ENCODE measurements at regions of chr12 and their contacts with region 1.

Region 1: DNA sequence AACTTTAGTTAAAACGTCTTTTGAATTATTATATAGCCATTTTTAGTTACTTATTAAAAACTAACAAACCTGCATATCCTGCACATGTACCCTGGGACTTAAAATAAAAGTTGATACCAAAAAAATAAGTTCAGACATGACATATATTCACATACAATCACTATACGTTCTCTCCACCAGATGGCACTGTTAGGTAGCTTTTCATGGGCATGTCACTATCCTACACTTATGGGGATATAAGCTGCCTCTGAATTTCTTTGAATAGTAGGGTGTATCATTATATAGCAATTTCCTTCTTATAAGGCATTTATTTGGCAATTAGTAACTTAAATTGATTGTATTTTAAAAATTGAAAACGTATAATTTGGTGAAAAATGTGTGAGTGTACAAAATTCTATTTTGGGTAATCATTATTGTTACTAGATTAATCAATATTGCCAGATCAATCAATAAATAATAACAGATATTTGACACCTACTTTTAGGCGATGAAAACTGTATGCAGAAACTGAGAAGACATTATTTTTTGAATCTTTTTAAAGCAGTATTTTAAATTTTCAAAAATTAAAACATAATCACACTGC is 31.8 kb upstream of the OR10A7 start:
- DNase-seq: peak; percentile 87
- H3K4me3 ChIP-seq: no peak overlapping the region
- H3K27ac ChIP-seq: no peak overlapping the region
- H3K4me1 ChIP-seq: no peaks in the 10 kb centered on the region
- H3K27me3 ChIP-seq: peaks cover 0 to 5% of the 10 kb centered on the region in 2 experiments
- CTCF ChIP-seq: peak; percentile 43 to 46
- POLR2A ChIP-seq: no peak

Region 2: GRCh38 chr12:55172686-55173085 is 16.4 kb before region 1 on chr12:
- CTCF ChIA-PET with region 1: interaction called, 10 read pairs
- POLR2A ChIA-PET with region 1: no interaction called
- dilution Hi-C with region 1: no loop called
- intact Hi-C with region 1: no loop called
- DNase-seq: no peak
- H3K4me3 ChIP-seq: no peak overlapping the region
- H3K27ac ChIP-seq: no peak overlapping the region
- H3K4me1 ChIP-seq: no peaks in the 10 kb centered on the region
- H3K27me3 ChIP-seq: no peaks in the 10 kb centered on the region
- CTCF ChIP-seq: no peak
- POLR2A ChIP-seq: no peak

Region 3: GRCh38 chr12:55280991-55281390 is 91.9 kb after region 1 on chr12:
- CTCF ChIA-PET with region 1: no interaction called
- POLR2A ChIA-PET with region 1: no interaction called
- dilution Hi-C with region 1: no loop called
- intact Hi-C with region 1: no loop called
- DNase-seq: no peak
- H3K4me3 ChIP-seq: no peak overlapping the region
- H3K27ac ChIP-seq: no peak overlapping the region
- H3K4me1 ChIP-seq: no peaks in the 10 kb centered on the region
- H3K27me3 ChIP-seq: no peaks in the 10 kb centered on the region
- CTCF ChIP-seq: no peak
- POLR2A ChIP-seq: no peak

Region 4: DNA sequence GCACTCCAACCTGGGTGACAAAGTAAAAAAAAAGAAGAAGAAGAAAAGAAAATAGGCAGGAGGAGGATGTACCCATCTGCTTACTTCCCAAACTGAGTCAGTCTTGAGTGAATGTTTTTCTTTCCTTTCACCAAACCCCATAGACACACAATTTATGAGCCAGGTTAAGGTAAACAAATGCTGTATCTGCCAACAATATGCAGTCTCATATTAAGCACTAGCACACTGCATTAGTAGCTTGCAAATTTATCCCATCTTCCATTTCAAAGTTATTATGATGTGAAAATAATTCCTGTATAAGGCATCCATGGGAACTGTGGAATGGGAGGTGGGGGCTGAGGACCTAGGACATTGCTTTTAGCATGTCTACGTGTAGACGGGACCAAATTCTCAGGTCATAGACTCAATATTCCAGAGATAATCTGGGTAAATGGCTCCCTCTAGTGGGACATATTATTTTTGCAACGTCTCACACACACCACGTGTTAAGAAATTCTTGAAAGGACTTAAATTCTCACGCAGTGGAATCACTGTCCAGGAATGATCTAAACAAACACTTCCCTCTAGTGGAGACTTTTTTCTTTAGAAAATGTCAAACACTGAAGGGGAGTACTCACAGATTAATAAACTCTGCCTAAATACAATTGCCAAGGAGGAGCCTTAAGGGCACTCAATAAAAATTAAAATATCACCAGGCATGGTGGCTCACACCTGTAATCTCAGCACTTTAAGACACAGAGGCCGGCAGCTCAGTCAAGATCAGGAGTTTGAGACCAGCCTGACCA is 430.5 kb after region 1 on chr12:
- CTCF ChIA-PET with region 1: interaction called, 62 read pairs
- POLR2A ChIA-PET with region 1: no interaction called
- dilution Hi-C with region 1: no loop called
- intact Hi-C with region 1: loop called (anchors 1 kb)
- DNase-seq: peak; percentile 95
- H3K4me3 ChIP-seq: no peak overlapping the region
- H3K27ac ChIP-seq: no peak overlapping the region
- H3K4me1 ChIP-seq: no peaks in the 10 kb centered on the region
- H3K27me3 ChIP-seq: peaks cover 4 to 6% of the 10 kb centered on the region in 2 experiments
- CTCF ChIP-seq: peak; percentile 49 to 77
- POLR2A ChIP-seq: no peak

Region 5: GRCh38 chr12:55728939-55729823 is 540.1 kb after region 1 on chr12 and contains the start of gene CD63:
- CTCF ChIA-PET with region 1: no interaction called
- POLR2A ChIA-PET with region 1: no interaction called
- dilution Hi-C with region 1: no loop called
- intact Hi-C with region 1: loop called (anchors 5 kb)
- DNase-seq: peak; percentile 88
- H3K4me3 ChIP-seq: peak within 1 kb of the TSS; percentile 71 to 89 (median 76)
- H3K27ac ChIP-seq: peak within 1 kb of the TSS; percentile 96
- H3K4me1 ChIP-seq: peaks cover 19% of the 10 kb centered on the region
- H3K27me3 ChIP-seq: no peaks in the 10 kb centered on the region
- CTCF ChIP-seq: no peak
- POLR2A ChIP-seq: peak; percentile 41
- total RNA-seq, gene CD63: 1,054 and 1,063 TPM in 2 replicates